ENCODE measurements at regions of chr5 and their contacts with region 1.

Region 1: DNA sequence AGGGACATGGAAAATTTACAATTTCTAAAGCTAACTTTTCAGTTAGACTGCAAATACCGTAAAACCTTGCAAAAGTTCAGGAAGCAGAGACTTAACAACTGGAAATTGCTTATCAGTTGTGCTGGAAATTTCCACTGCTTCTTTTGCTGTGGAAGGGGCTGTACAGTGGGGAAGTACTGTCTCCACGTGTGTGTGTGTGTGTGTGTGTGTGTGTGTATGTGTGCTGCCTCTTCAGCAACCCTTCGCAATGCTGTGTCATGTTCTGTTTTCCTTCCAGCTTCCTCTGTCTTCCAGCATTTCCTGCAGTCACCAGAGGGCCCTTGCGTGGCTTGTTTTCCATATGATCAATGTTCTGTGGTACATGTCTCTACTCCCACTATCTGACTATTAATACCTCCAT is 87.5 kb upstream of the RANBP3L start:
- DNase-seq: peak in 4 of 5 donors; percentile 31 to 42 (median 38)
- ATAC-seq: peak; percentile 64 to 81 (median 76)
- H3K4me3 ChIP-seq: no peak overlapping the region
- H3K27ac ChIP-seq: peak overlapping the region in 3 of 12 donors; percentile 3 to 35 (median 27)
- H3K4me1 ChIP-seq: peaks cover 0 to 16% (median 0%) of the 10 kb centered on the region in 12 donors
- H3K27me3 ChIP-seq: peaks cover 0 to 3% (median 0%) of the 10 kb centered on the region in 9 donors
- CTCF ChIP-seq: no peak
- POLR2A ChIP-seq: no peak

Region 2: DNA sequence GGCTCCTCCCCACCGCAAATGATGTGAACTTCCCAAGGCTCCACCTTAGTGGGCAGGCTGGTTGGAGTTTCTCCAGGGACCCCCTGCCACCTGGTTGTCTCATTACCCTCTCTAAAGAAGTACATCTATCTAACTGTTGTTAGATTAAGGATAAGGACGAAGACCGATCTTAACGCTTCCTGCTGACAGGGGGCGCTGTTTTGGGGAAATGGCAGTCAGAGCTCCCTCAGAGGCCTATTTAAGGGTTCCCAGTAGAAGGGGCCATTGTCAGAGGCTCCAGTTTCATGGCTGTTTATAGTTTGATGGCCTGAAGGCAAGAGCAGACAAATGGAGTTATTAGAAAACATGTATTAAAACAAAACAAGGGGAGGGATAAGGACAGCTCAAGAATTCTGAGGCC is 671.5 kb before region 1 on chr5:
- intact Hi-C with region 1: no loop called
- DNase-seq: no peak
- ATAC-seq: no peak
- H3K4me3 ChIP-seq: no peak overlapping the region
- H3K27ac ChIP-seq: no peak overlapping the region
- H3K4me1 ChIP-seq: no peaks in the 10 kb centered on the region
- H3K27me3 ChIP-seq: no peaks in the 10 kb centered on the region
- CTCF ChIP-seq: no peak
- POLR2A ChIP-seq: no peak

Region 3: DNA sequence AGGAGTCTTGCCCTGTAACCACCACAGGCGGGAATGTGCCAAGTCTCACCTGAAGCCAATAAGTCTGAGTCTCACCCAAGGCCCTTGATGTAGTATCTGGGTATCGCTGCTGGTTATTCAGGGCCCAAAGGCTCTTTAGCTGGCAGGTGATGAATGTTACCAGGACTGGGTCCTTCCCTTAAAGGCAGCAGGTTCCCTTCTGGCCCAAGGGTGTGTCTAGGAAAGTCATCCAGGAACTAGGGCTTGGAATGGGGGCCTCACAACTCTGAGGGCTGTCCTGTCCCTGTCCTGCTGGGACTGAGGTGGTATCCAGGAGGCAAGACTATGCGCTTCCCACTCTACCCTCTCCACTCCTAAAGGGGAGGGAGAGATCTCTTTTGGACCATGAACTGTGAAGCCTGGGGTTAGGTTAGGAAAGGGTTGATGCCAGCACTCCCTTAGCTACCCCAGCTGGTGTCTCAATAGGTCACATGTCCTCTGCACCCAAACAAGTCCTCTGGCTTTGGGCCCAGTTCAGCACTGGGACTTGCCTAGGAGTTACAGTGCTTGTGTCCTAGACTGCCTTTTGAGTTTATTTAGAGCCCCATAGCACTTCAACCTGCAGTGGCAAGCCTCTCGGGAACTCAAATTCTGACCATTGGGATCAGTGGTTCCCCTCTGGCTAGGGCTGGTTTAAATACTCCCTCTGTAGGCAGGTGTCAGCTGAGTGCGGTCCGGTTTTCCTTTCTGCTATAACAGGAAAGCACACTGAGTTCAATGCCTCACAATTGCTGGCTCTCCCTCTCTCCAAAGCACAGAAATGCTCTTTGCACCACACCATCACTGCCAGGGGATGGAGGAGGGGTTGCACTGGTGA is 65.1 kb before region 1 on chr5:
- intact Hi-C with region 1: loop called in 1 of 10 experiments (anchors 10 kb)
- DNase-seq: peak in 3 of 5 donors; percentile 12 to 81 (median 61)
- ATAC-seq: peak; percentile 69 to 91 (median 84)
- H3K4me3 ChIP-seq: no peak overlapping the region
- H3K27ac ChIP-seq: no peak overlapping the region
- H3K4me1 ChIP-seq: peaks cover 0 to 22% (median 0%) of the 10 kb centered on the region in 12 donors
- H3K27me3 ChIP-seq: no peaks in the 10 kb centered on the region
- CTCF ChIP-seq: no peak
- POLR2A ChIP-seq: no peak

Measured in heart left ventricle (tissue), 16 donors.